ENCODE measurements at regions of chr12 and their contacts with region 1.

Region 1: GRCh38 chr12:44532940-44533339 is 343.2 kb downstream of the NELL2 start:
- DNase-seq: no peak
- ATAC-seq: no peak
- H3K4me3 ChIP-seq: no peak overlapping the region
- H3K4me3 Mint-ChIP-seq: no peak overlapping the region
- H3K27ac ChIP-seq: no peak overlapping the region
- H3K27ac Mint-ChIP-seq: peak overlapping the region in 1 of 9 donors; percentile 33
- H3K4me1 ChIP-seq: no peaks in the 10 kb centered on the region
- H3K4me1 Mint-ChIP-seq: peaks cover 0 to 4% (median 0%) of the 10 kb centered on the region in 7 donors
- H3K27me3 ChIP-seq: no peaks in the 10 kb centered on the region
- H3K27me3 Mint-ChIP-seq: no peaks in the 10 kb centered on the region

Region 2: DNA sequence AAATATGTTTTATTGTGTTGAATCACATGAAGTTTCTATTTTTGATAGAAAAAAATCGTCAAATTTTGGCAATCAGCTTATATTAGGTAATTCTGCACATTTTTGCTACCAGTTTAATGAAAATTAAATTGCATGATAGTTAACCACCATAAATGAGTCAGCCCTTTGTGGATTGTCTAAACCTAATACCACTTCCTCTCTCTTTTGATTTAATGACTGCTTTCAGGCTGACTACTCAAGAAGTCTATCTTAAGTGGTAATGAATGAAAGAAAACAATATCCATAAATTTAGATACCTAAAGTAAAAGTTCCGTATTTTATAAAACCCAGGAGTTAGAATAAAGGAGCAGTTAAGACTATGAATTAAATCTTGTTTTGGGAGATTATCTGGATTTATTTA is 246.6 kb before region 1 on chr12:
- CTCF ChIA-PET with region 1: no interaction called
- POLR2A ChIA-PET with region 1: no interaction called
- intact Hi-C with region 1: no loop called
- DNase-seq: no peak
- ATAC-seq: no peak
- H3K4me3 ChIP-seq: no peak overlapping the region
- H3K4me3 Mint-ChIP-seq: no peak overlapping the region
- H3K27ac ChIP-seq: no peak overlapping the region
- H3K27ac Mint-ChIP-seq: no peak overlapping the region
- H3K4me1 ChIP-seq: peaks cover 3 to 6% of the 10 kb centered on the region in 2 donors
- H3K4me1 Mint-ChIP-seq: peaks cover 6 to 19% (median 13%) of the 10 kb centered on the region in 7 donors
- H3K27me3 ChIP-seq: no peaks in the 10 kb centered on the region
- H3K27me3 Mint-ChIP-seq: no peaks in the 10 kb centered on the region

Region 3: DNA sequence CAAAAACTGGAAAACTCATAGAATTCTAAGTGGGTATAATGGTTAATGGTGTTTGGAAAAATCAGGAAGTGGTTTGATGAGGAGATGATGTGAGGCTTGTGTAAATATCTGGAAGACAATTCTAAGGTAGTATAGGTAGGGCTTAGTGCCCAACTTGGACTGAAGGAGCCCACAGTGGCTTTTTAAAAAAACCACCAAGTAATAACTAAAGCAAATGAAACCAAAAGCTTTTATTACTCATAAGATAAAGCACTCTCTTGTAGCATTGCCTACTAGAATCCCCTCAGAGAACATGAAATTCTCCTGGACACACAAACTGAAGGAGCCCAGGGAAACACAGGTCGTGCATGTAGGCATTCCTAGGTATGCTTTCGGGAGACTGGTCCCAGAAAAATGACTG is 18.7 kb after region 1 on chr12:
- CTCF ChIA-PET with region 1: no interaction called
- POLR2A ChIA-PET with region 1: no interaction called
- intact Hi-C with region 1: loop called in 1 of 2 experiments (anchors 2 kb)
- DNase-seq: no peak
- ATAC-seq: no peak
- H3K4me3 ChIP-seq: no peak overlapping the region
- H3K4me3 Mint-ChIP-seq: no peak overlapping the region
- H3K27ac ChIP-seq: no peak overlapping the region
- H3K27ac Mint-ChIP-seq: peak overlapping the region in 1 of 9 donors; percentile 3
- H3K4me1 ChIP-seq: no peaks in the 10 kb centered on the region
- H3K4me1 Mint-ChIP-seq: peaks cover 0 to 56% (median 13%) of the 10 kb centered on the region in 7 donors
- H3K27me3 ChIP-seq: no peaks in the 10 kb centered on the region
- H3K27me3 Mint-ChIP-seq: no peaks in the 10 kb centered on the region

Region 4: GRCh38 chr12:44563486-44563885 is 30.5 kb after region 1 on chr12:
- CTCF ChIA-PET with region 1: no interaction called
- POLR2A ChIA-PET with region 1: no interaction called
- intact Hi-C with region 1: no loop called
- DNase-seq: no peak
- ATAC-seq: no peak
- H3K4me3 ChIP-seq: no peak overlapping the region
- H3K4me3 Mint-ChIP-seq: no peak overlapping the region
- H3K27ac ChIP-seq: no peak overlapping the region
- H3K27ac Mint-ChIP-seq: no peak overlapping the region
- H3K4me1 ChIP-seq: no peaks in the 10 kb centered on the region
- H3K4me1 Mint-ChIP-seq: peaks cover 0 to 32% (median 9%) of the 10 kb centered on the region in 7 donors
- H3K27me3 ChIP-seq: no peaks in the 10 kb centered on the region
- H3K27me3 Mint-ChIP-seq: no peaks in the 10 kb centered on the region

Measured in naive thymus-derived CD4-positive, alpha-beta T cell (primary cell).